GM12878 (cell line): ENCODE measurements at regions of chr17 and their contacts with region 1.

Region 1: DNA sequence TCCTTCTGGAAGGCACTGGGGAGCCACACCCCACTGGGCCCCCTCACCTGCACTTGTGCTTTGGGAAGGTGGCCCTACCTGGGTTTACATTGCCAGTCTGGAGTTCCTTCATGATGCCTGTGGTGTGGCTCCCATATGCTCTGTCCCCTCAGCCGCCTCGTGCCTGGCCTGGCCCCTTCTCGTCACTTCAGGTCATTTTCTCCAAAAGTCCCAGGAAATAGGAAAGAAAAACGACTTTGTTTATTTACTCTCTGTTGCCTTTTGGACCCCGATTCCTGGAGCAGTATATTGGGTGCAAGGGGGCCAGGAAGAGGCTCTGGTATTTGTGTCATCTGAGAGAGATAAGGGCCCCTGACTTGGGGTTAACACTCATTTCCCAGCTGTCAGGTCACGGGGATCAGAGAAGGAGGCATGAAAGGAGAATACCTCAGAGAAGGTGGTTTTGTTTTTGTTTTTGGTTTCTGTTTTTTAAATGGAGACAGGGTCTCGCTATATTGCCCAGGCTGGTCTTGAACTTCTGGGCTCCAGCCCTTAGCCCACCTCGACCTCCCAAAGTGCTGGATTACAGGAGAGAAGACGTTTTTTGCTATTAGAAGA is 4.7 kb downstream of the SOCS3 start:
- DNase-seq: no peak
- ATAC-seq: peak; percentile 3; the same call in 2 of the 3 replicates
- H3K4me3 ChIP-seq: no peak overlapping the region
- H3K27ac ChIP-seq: peak overlapping the region; percentile 78
- H3K4me1 ChIP-seq: peaks cover 41% of the 10 kb centered on the region
- H3K27me3 ChIP-seq: peaks cover 0 to 3% of the 10 kb centered on the region in 2 experiments; a peak in 1 of 4 replicates
- CTCF ChIP-seq: no peak
- EP300 ChIP-seq: peak in 1 of 2 experiments; percentile 44; a peak in 1 of 4 replicates
- POLR2A ChIP-seq: no peak
- RAD21 ChIP-seq: no peak

Region 2: GRCh38 chr17:78341559-78342448 is 13.3 kb before region 1 on chr17:
- CTCF ChIA-PET with region 1: interaction called, 14 read pairs
- POLR2A ChIA-PET with region 1: interaction called, 15 read pairs
- RAD21 ChIA-PET with region 1: interaction called, 9 read pairs
- SMC1A ChIA-PET with region 1: interaction called, 11 read pairs
- in situ Hi-C with region 1: no loop called
- intact Hi-C with region 1: loop called (anchors 2 kb)
- DNase-seq: no peak
- ATAC-seq: peak; percentile 2
- H3K4me3 ChIP-seq: no peak overlapping the region; the same call in 1 of the 2 replicates
- H3K27ac ChIP-seq: no peak overlapping the region
- H3K4me1 ChIP-seq: peaks cover 60% of the 10 kb centered on the region
- H3K27me3 ChIP-seq: no peaks in the 10 kb centered on the region
- CTCF ChIP-seq: no peak
- EP300 ChIP-seq: no peak
- POLR2A ChIP-seq: no peak
- RAD21 ChIP-seq: no peak